CD8-positive, alpha-beta T cell (primary cell): ENCODE measurements at regions of chr17 and their contacts with region 1.

Region 1: GRCh38 chr17:30104575-30105339 is 11.9 kb upstream of the NSRP1 start:
- DNase-seq: peak; percentile 44 to 85 (median 71)
- ATAC-seq: peak; percentile 95
- H3K4me3 ChIP-seq: peak overlapping the region; percentile 43 to 45
- H3K4me3 Mint-ChIP-seq: peak overlapping the region; percentile 85
- H3K27ac ChIP-seq: no peak overlapping the region
- H3K27ac Mint-ChIP-seq: no peak overlapping the region
- H3K4me1 ChIP-seq: no peaks in the 10 kb centered on the region
- H3K4me1 Mint-ChIP-seq: peaks cover 6% of the 10 kb centered on the region
- H3K27me3 ChIP-seq: no peaks in the 10 kb centered on the region
- H3K27me3 Mint-ChIP-seq: peaks cover 3% of the 10 kb centered on the region
- CTCF ChIP-seq: peak; percentile 93

Region 2: DNA sequence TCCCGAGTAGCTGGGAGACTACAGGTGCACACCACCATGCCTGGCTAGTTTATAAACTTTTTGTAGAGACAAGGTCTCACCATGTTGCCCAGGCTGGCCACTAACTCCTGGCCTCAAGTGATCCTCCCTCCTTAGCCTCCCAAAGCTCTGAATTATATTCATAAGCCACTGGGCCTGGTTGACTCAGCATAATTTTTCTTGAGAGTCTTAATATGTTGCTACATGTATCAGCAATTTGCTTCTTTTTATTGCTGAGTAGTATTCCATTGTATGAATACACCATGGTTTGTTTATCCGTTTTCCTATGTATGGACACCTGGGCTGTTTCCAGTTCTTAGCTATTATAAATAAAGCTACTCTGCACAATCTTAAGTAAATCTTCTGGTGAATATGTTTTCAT is 30.5 kb before region 1 on chr17:
- CTCF ChIA-PET with region 1: no interaction called
- POLR2A ChIA-PET with region 1: no interaction called
- intact Hi-C with region 1: no loop called
- DNase-seq: no peak
- ATAC-seq: no peak
- H3K4me3 ChIP-seq: no peak overlapping the region
- H3K4me3 Mint-ChIP-seq: no peak overlapping the region
- H3K27ac ChIP-seq: no peak overlapping the region
- H3K27ac Mint-ChIP-seq: no peak overlapping the region
- H3K4me1 ChIP-seq: no peaks in the 10 kb centered on the region
- H3K4me1 Mint-ChIP-seq: no peaks in the 10 kb centered on the region
- H3K27me3 ChIP-seq: no peaks in the 10 kb centered on the region
- H3K27me3 Mint-ChIP-seq: peaks cover 16% of the 10 kb centered on the region
- CTCF ChIP-seq: no peak

Region 3: DNA sequence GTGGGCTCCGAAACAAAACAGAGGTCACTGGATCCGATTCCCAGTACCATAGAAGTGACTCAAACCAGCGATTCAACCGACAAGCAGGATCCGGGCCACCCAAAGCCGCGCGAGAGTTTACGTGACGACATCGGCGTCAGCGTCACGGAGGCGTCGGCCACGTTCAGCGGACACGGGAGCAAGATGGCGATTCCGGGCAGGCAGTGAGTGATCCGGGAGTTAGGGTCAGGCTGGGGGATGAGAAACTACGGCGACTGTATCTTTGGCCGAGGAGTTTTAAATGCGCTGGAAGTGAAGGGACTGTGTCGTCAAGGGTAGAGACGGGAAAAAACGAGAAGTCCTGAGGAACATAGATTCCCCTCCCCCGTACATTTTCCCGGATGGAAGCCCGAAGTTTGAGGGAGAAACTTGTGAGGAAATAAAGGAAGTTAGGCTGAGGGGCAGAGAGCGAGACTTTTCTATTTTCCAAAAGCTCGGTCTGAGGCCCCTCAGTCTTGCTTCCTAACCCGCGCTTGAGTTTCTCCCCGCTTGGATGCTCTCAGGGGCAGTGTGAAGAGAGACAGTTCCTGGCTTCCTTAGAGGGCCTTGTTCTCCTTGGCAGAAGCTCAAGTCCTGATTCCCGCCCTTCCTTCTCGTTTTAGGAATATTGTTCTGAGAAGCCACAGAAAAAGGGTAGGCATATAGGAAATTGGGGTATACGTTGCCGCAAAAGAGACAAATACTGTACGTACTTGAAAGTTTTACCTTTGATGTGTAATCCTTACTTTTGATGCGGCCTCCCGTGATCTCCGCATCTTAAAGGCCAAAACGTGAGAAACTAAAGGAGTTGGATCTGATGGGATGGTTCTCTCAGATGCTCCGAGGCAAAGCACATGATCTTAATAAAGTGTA is 12.1 kb after region 1 on chr17 and contains the start of gene NSRP1:
- CTCF ChIA-PET with region 1: interaction called, 37 read pairs
- POLR2A ChIA-PET with region 1: interaction called, 4 read pairs
- intact Hi-C with region 1: no loop called
- DNase-seq: peak; percentile 83 to 96 (median 92)
- ATAC-seq: peak; percentile 97
- H3K4me3 ChIP-seq: peak within 1 kb of the TSS; percentile 66 to 96
- H3K4me3 Mint-ChIP-seq: peak within 1 kb of the TSS; percentile 100
- H3K27ac ChIP-seq: peak within 1 kb of the TSS; percentile 95 to 99
- H3K27ac Mint-ChIP-seq: peak within 1 kb of the TSS; percentile 100
- H3K4me1 ChIP-seq: peaks cover 16% of the 10 kb centered on the region
- H3K4me1 Mint-ChIP-seq: peaks cover 41% of the 10 kb centered on the region
- H3K27me3 ChIP-seq: no peaks in the 10 kb centered on the region
- H3K27me3 Mint-ChIP-seq: no peaks in the 10 kb centered on the region
- CTCF ChIP-seq: no peak
- total RNA-seq, gene NSRP1: 22.4 to 23.1 TPM

Region 4: GRCh38 chr17:30124273-30124796 is 19.6 kb after region 1 on chr17:
- CTCF ChIA-PET with region 1: interaction called, 29 read pairs
- POLR2A ChIA-PET with region 1: interaction called, 3 read pairs
- intact Hi-C with region 1: no loop called
- DNase-seq: no peak
- ATAC-seq: no peak
- H3K4me3 ChIP-seq: no peak overlapping the region
- H3K4me3 Mint-ChIP-seq: no peak overlapping the region
- H3K27ac ChIP-seq: no peak overlapping the region
- H3K27ac Mint-ChIP-seq: peak overlapping the region; percentile 3
- H3K4me1 ChIP-seq: peaks cover 9% of the 10 kb centered on the region
- H3K4me1 Mint-ChIP-seq: peaks cover 38% of the 10 kb centered on the region
- H3K27me3 ChIP-seq: no peaks in the 10 kb centered on the region
- H3K27me3 Mint-ChIP-seq: no peaks in the 10 kb centered on the region
- CTCF ChIP-seq: no peak

Region 5: DNA sequence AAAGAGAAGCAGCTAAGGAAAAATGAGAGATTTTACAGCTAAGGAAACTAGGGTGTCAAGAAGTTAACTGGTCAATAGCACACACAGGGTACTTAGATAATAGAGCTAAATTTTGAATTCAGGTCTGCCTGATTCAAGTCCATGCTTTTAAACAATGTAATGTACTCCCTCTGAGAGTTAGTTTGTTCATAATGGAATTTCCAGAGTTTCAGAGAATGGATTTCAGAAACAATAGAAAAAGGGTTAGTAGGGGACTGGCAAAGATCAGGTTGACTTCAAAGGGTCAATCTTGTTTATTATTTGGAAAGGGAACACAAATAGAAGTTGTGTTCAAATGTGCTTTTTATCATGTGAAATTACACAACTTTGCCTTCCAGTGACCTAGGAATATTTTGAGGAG is 29.8 kb after region 1 on chr17:
- CTCF ChIA-PET with region 1: interaction called, 11 read pairs
- POLR2A ChIA-PET with region 1: no interaction called
- intact Hi-C with region 1: no loop called
- DNase-seq: no peak
- ATAC-seq: no peak
- H3K4me3 ChIP-seq: no peak overlapping the region
- H3K4me3 Mint-ChIP-seq: no peak overlapping the region
- H3K27ac ChIP-seq: no peak overlapping the region
- H3K27ac Mint-ChIP-seq: no peak overlapping the region
- H3K4me1 ChIP-seq: no peaks in the 10 kb centered on the region
- H3K4me1 Mint-ChIP-seq: peaks cover 37% of the 10 kb centered on the region
- H3K27me3 ChIP-seq: no peaks in the 10 kb centered on the region
- H3K27me3 Mint-ChIP-seq: no peaks in the 10 kb centered on the region
- CTCF ChIP-seq: no peak

Region 6: DNA sequence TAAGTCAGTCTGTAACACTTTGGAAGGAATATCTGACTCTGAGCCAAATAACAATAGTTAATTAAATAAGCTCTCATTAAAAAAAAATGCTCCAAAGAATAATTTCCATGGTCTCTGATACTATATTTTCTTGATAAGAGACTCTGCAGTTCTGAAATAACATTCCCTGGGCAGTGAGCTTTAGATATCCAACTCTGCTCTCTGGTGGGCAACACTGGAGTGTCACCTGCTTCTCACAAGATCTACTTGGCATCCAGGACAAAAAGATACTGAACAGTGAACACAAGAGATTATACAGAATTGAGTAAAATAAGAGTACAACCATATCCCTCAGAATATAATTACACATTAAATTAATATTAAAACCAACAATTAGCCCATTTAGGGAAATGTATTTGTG is 173.3 kb after region 1 on chr17:
- CTCF ChIA-PET with region 1: interaction called, 4 read pairs
- POLR2A ChIA-PET with region 1: no interaction called
- intact Hi-C with region 1: loop called in 1 of 2 experiments (anchors 1 kb)
- DNase-seq: peak in 3 of 9 experiments; percentile 22 to 37 (median 23)
- ATAC-seq: peak; percentile 34
- H3K4me3 ChIP-seq: no peak overlapping the region
- H3K4me3 Mint-ChIP-seq: no peak overlapping the region
- H3K27ac ChIP-seq: no peak overlapping the region
- H3K27ac Mint-ChIP-seq: no peak overlapping the region
- H3K4me1 ChIP-seq: no peaks in the 10 kb centered on the region
- H3K4me1 Mint-ChIP-seq: no peaks in the 10 kb centered on the region
- H3K27me3 ChIP-seq: no peaks in the 10 kb centered on the region
- H3K27me3 Mint-ChIP-seq: no peaks in the 10 kb centered on the region
- CTCF ChIP-seq: peak; percentile 36

Region 7: DNA sequence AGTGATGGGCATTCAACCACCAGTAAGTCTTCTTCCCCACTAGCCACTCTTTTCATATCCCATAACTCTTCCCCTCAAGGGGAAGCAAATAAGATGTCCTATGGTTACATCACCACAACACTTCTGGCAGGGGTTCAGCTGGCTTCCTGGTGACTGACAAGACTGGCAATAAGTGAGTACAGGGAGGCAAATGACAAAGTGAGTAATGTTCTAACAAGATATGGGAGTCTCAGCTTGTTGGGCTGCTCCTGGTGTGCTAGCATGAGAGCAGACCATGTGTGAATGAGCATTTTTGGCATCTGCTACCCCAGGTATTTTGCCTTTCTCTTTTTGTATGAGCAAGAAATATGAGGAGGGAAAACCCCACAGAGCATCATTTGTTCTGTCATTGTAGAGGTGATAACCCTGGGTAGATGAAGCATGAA is 219.2 kb after region 1 on chr17:
- CTCF ChIA-PET with region 1: interaction called, 10 read pairs
- POLR2A ChIA-PET with region 1: no interaction called
- intact Hi-C with region 1: no loop called
- DNase-seq: peak in 8 of 9 experiments; percentile 12 to 66 (median 46)
- ATAC-seq: peak; percentile 63
- H3K4me3 ChIP-seq: no peak overlapping the region
- H3K4me3 Mint-ChIP-seq: peak overlapping the region; percentile 11
- H3K27ac ChIP-seq: peak overlapping the region; percentile 0 to 60
- H3K27ac Mint-ChIP-seq: peak overlapping the region; percentile 91
- H3K4me1 ChIP-seq: peaks cover 24% of the 10 kb centered on the region
- H3K4me1 Mint-ChIP-seq: peaks cover 30% of the 10 kb centered on the region
- H3K27me3 ChIP-seq: no peaks in the 10 kb centered on the region
- H3K27me3 Mint-ChIP-seq: no peaks in the 10 kb centered on the region
- CTCF ChIP-seq: no peak

Region 8: GRCh38 chr17:30716461-30717300 is 611.9 kb after region 1 on chr17:
- CTCF ChIA-PET with region 1: no interaction called
- POLR2A ChIA-PET with region 1: no interaction called
- intact Hi-C with region 1: loop called in 1 of 2 experiments (anchors 10 kb)
- DNase-seq: no peak
- ATAC-seq: no peak
- H3K4me3 ChIP-seq: no peak overlapping the region
- H3K4me3 Mint-ChIP-seq: no peak overlapping the region
- H3K27ac ChIP-seq: no peak overlapping the region
- H3K27ac Mint-ChIP-seq: no peak overlapping the region
- H3K4me1 ChIP-seq: no peaks in the 10 kb centered on the region
- H3K4me1 Mint-ChIP-seq: peaks cover 8% of the 10 kb centered on the region
- H3K27me3 ChIP-seq: no peaks in the 10 kb centered on the region
- H3K27me3 Mint-ChIP-seq: no peaks in the 10 kb centered on the region
- CTCF ChIP-seq: no peak

Region 9: DNA sequence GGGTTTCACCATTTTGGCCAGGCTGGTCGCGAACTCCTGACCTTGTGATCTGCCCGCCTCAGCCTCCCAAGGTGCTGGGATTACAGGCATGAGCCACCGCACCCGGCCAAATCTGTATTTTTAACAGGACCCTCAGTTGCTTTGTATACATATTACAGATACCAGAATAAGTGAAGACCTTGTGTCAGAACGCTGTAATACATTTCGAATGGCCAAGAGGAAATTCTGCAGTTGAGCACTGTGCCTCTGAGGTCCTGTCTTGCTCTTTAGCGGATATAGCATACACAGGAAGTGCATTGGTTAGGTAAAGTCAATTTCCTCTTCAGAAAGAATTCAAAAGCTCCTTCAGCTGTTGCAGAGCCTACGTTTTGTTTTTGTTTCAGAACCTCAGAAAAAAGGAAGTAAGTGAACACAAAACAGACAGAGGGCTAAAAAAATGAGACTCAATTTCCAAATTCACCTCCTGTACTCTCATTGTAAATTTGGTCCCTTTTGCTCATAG is 704.1 kb after region 1 on chr17:
- CTCF ChIA-PET with region 1: no interaction called
- POLR2A ChIA-PET with region 1: no interaction called
- intact Hi-C with region 1: no loop called
- DNase-seq: peak in 8 of 9 experiments; percentile 1 to 88 (median 48)
- ATAC-seq: peak; percentile 85
- H3K4me3 ChIP-seq: peak overlapping the region; percentile 26 to 48
- H3K4me3 Mint-ChIP-seq: peak overlapping the region; percentile 83
- H3K27ac ChIP-seq: peak overlapping the region; percentile 53 to 89
- H3K27ac Mint-ChIP-seq: peak overlapping the region; percentile 99
- H3K4me1 ChIP-seq: peaks cover 63% of the 10 kb centered on the region
- H3K4me1 Mint-ChIP-seq: peaks cover 70% of the 10 kb centered on the region
- H3K27me3 ChIP-seq: no peaks in the 10 kb centered on the region
- H3K27me3 Mint-ChIP-seq: no peaks in the 10 kb centered on the region
- CTCF ChIP-seq: no peak